WTC11 (cell line): ENCODE measurements at regions of chr6 and their contacts with region 1.

Region 1: GRCh38 chr6:12911387-12911960 is 194.9 kb downstream of the PHACTR1 start:
- DNase-seq: no peak
- ATAC-seq: no peak; the same call in 1 of the 2 replicates
- H3K4me3 Mint-ChIP-seq: no peak overlapping the region
- H3K27ac Mint-ChIP-seq: no peak overlapping the region
- H3K4me1 Mint-ChIP-seq: peaks cover 26% of the 10 kb centered on the region
- H3K27me3 Mint-ChIP-seq: no peaks in the 10 kb centered on the region
- CTCF ChIP-seq: no peak

Region 2: GRCh38 chr6:12890171-12890790 is 21.2 kb before region 1 on chr6:
- CTCF ChIA-PET with region 1: interaction called, 14 read pairs
- POLR2A ChIA-PET with region 1: no interaction called
- DNase-seq: peak; percentile 70
- ATAC-seq: peak; percentile 45
- H3K4me3 Mint-ChIP-seq: no peak overlapping the region
- H3K27ac Mint-ChIP-seq: no peak overlapping the region
- H3K4me1 Mint-ChIP-seq: peaks cover 20% of the 10 kb centered on the region
- H3K27me3 Mint-ChIP-seq: no peaks in the 10 kb centered on the region
- CTCF ChIP-seq: peak; percentile 65

Region 3: GRCh38 chr6:13012977-13013680 is 101.7 kb after region 1 on chr6:
- CTCF ChIA-PET with region 1: interaction called, 15 read pairs
- POLR2A ChIA-PET with region 1: no interaction called
- DNase-seq: peak; percentile 84
- ATAC-seq: peak; percentile 89
- H3K4me3 Mint-ChIP-seq: peak overlapping the region; percentile 84
- H3K27ac Mint-ChIP-seq: no peak overlapping the region
- H3K4me1 Mint-ChIP-seq: peaks cover 40% of the 10 kb centered on the region
- H3K27me3 Mint-ChIP-seq: peaks cover 54% of the 10 kb centered on the region
- CTCF ChIP-seq: no peak

Region 4: DNA sequence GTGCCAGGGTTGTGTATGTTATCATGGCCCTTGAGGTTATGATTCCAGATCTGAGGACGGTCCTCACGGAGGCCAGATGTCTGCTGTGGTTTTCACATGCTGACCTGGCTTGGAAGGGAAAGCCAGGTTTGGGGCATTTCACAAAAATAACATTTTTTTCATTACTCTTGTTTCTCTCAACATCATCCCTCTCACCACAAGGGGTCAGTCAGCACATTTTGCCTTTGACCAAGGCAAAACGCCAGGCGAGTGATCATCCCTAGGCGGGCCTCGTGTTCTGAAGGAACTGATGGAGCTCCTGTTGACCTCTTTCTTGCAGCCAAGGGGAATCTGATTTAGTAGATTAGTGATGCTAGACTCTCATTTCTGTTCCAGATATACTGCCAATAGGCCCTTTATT is 283.4 kb after region 1 on chr6:
- CTCF ChIA-PET with region 1: interaction called, 11 read pairs
- POLR2A ChIA-PET with region 1: no interaction called
- DNase-seq: peak; percentile 61
- ATAC-seq: peak; percentile 73
- H3K4me3 Mint-ChIP-seq: no peak overlapping the region
- H3K27ac Mint-ChIP-seq: no peak overlapping the region
- H3K4me1 Mint-ChIP-seq: peaks cover 26% of the 10 kb centered on the region
- H3K27me3 Mint-ChIP-seq: no peaks in the 10 kb centered on the region; the same call in 1 of the 2 replicates
- CTCF ChIP-seq: no peak